ENCODE measurements at regions of chr2 and their contacts with region 1.

Region 1: GRCh38 chr2:107589079-107589491 is 237.6 kb upstream of the RGPD4 start:
- DNase-seq: no peak
- ATAC-seq: no peak
- H3K4me3 ChIP-seq: no peak overlapping the region
- H3K27ac ChIP-seq: no peak overlapping the region
- H3K4me1 ChIP-seq: peaks cover 3% of the 10 kb centered on the region
- H3K27me3 ChIP-seq: no peaks in the 10 kb centered on the region

Region 2: GRCh38 chr2:107669335-107669734 is 80.2 kb after region 1 on chr2:
- intact Hi-C with region 1: loop called in 1 of 4 experiments (anchors 10 kb)
- DNase-seq: no peak
- ATAC-seq: peak in 1 of 2 donors; percentile 51
- H3K4me3 ChIP-seq: no peak overlapping the region
- H3K27ac ChIP-seq: no peak overlapping the region
- H3K4me1 ChIP-seq: no peaks in the 10 kb centered on the region
- H3K27me3 ChIP-seq: no peaks in the 10 kb centered on the region